ENCODE measurements at regions of chr16 and their contacts with region 1.

Region 1: DNA sequence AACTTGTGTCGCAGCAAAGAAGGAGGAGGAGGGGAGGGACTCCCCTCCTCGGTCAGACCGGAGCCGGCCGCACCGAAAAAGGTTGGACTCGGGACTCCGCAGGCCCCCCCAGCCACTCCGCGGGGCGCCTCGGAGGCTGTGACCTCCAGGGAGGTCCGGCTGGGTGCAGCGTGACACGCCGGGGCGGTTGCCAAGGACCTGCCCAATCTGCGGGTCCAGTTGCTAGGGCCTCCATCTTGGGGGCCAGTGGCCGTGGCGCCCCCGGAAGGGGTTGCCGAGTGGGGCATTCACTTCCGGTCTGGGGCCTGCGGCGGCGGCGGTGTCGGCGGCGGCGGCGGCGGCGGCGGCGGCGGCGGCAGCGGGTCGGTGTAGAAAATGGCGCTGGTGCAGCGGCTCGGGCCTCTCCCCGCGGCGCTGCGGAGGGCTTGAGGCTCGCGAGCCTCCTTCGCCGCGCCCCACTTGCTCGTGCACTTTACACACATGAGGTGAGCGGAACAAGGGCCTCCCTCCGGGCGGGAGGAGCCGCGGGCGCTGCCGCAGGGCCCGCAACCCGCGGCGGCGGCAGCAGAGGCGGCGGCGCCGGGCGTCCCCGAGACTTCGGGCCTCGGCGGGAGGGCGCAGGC is at the start of gene TNRC6A:
- DNase-seq: peak; percentile 32
- H3K4me3 ChIP-seq: peak within 1 kb of the TSS; percentile 91
- H3K27me3 ChIP-seq: no peaks in the 10 kb centered on the region
- CTCF ChIP-seq: no peak
- polyA plus RNA-seq, gene TNRC6A: 44.8 and 49.6 TPM in 2 replicates

Region 2: GRCh38 chr16:24525970-24526559 is 203.4 kb before region 1 on chr16:
- CTCF ChIA-PET with region 1: no interaction called
- POLR2A ChIA-PET with region 1: no interaction called
- DNase-seq: peak; percentile 71
- H3K4me3 ChIP-seq: no peak overlapping the region
- H3K27me3 ChIP-seq: no peaks in the 10 kb centered on the region
- CTCF ChIP-seq: no peak

Region 3: DNA sequence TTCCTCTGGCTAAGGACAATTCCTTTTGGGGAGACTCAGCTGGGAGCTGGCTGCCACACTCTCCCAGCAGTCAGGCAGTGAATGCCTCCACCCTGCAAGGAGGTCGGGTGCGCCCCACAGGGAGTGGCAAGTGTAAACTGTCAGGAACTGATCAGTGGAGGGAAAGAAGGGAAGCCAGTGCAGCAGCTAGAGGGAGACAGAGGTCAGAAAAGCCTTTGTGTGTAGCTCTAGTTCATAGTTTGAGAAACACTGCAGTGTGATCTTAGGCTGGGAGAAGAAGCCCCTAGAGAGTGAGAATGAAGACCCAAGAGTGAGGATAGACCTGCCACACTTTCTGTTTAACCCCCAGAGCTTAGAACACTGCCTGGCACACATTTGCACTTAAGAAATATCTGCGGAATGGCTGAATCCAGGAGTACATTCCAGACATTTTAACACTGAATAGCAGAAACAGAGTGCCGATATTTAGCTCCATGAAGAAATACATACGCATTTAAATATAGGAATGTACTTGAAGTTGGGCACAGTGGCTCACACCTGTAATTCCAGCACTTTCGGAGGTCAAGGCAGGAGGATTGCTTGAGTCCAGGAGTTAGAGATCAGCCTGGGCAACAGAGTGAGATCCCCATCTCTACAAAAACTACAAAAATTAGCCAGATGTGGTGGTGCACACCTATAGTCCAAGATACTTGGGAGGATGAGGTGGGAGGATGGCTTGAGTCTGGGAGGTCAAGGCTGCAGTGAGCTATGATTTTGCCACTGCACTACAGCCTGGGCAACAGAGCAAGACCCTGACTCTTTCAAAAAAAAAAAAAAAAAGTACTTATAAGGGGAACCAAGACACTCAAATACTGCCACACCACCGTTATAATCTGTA is 105.2 kb after region 1 on chr16:
- CTCF ChIA-PET with region 1: no interaction called
- POLR2A ChIA-PET with region 1: interaction called, 14 read pairs
- DNase-seq: no peak
- H3K4me3 ChIP-seq: no peak overlapping the region
- H3K27me3 ChIP-seq: no peaks in the 10 kb centered on the region
- CTCF ChIP-seq: peak; percentile 80

Measured in BJ (cell line).